ENCODE measurements at regions of chr9 and their contacts with region 1.

Region 1: DNA sequence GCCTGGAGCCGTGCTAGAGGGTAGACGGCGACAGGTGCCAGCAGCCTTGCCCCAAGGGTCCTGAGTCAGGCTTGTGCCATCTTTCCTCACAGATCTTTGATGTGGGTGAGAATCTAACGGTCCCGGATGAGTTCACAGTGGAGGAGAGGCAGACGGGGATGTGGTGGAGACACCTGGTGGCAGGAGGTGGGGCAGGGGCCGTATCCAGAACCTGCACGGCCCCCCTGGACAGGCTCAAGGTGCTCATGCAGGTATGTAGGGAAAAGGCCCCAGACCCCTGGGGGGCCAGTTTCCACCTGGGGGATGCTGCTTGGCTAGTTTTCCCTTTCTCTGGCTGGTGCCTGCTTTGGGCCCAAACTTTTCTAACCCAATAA is 24.0 kb downstream of the PTGES2 start:
- DNase-seq: no peak
- H3K4me3 ChIP-seq: no peak overlapping the region
- H3K27ac ChIP-seq: no peak overlapping the region
- H3K4me1 ChIP-seq: peaks cover 0 to 35% (median 29%) of the 10 kb centered on the region in 4 experiments
- H3K27me3 ChIP-seq: no peaks in the 10 kb centered on the region

Region 2: DNA sequence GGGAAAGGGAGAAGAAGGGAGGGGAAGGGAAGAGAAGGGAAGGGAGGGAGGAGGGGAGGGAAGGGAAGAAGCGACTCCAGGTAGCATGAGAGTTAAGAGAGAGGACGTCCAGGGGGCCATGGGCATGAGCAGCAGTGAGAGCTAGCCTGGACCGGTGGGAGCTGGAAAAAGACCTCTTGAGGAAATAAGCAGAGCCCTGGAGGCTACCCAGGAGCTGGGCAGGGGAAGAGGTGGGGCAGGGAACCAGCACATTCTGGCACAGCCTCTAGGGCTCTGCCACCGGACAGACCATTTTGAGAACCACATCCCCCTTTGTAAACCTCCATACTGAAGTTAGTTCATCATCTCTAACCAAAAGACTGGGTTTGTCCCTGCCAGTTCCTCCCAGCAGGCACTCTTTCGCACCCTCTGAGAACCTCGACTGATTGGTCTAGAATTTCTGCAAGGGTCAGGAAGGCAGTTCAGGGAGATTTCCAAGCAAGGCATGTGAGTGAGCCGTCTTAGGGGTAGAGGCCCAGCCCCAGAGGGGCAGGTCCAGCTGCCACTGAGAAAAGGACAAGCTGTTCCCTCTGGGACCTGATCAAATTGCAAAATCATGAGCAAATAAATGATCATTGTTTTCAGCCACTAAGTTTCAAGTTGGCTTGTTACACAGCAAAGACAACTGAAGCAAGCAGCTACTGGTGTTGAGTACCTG is 48.1 kb before region 1 on chr9:
- CTCF ChIA-PET with region 1: no interaction called
- POLR2A ChIA-PET with region 1: no interaction called
- DNase-seq: no peak
- H3K4me3 ChIP-seq: no peak overlapping the region
- H3K27ac ChIP-seq: no peak overlapping the region
- H3K4me1 ChIP-seq: peaks cover 0 to 12% (median 7%) of the 10 kb centered on the region in 4 experiments
- H3K27me3 ChIP-seq: no peaks in the 10 kb centered on the region

Region 3: DNA sequence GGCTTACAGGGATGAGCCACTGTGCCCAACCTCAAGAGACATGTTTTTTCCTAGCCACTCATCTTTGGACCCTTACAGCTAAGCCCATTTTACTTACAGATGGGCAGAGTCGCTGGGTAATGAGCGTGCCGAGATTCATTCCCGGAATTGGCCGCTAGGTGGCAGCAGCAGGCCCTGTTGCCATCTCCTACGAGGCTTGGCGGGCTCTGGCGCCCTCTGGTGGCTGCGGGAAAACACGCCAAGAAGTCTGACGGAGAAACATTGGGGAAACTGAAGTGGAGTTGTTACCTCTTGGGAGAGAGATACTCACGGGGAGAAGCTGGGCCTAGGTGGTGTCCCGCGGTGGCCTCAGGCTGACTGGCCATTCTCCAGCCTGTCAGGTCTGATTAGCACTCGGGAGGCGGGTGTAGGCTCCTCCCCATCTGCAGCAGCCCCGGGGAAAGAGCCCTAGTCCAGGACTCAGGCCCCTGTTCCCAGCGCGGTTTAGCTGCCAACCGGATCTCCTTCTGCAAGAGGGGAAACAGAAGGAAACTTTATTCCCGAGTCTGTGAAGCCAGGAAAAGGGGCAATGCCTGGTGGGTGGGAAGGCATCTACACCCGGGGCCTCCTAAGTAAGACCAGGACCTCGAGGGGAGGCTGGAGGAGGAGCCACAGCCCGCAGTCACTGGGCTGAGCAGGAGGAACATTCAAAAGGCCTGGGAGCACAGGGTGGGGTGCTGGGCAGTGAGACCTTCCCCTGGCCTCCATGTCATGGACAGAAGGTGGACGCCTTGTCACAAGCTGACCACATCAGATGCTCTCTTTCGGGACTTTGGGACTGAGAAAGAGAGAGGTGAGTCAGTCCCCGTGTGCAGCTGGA is 14.3 kb after region 1 on chr9:
- CTCF ChIA-PET with region 1: interaction called, 47 read pairs
- POLR2A ChIA-PET with region 1: interaction called, 3 read pairs
- DNase-seq: peak; percentile 88 to 94 (median 88)
- H3K4me3 ChIP-seq: peak overlapping the region in 2 of 7 experiments; percentile 11 to 45
- H3K27ac ChIP-seq: no peak overlapping the region
- H3K4me1 ChIP-seq: peaks cover 0 to 7% (median 3%) of the 10 kb centered on the region in 4 experiments
- H3K27me3 ChIP-seq: no peaks in the 10 kb centered on the region

Measured in common myeloid progenitor, CD34-positive (primary cell).